ENCODE measurements at regions of chr12 and their contacts with region 1.

Region 1: DNA sequence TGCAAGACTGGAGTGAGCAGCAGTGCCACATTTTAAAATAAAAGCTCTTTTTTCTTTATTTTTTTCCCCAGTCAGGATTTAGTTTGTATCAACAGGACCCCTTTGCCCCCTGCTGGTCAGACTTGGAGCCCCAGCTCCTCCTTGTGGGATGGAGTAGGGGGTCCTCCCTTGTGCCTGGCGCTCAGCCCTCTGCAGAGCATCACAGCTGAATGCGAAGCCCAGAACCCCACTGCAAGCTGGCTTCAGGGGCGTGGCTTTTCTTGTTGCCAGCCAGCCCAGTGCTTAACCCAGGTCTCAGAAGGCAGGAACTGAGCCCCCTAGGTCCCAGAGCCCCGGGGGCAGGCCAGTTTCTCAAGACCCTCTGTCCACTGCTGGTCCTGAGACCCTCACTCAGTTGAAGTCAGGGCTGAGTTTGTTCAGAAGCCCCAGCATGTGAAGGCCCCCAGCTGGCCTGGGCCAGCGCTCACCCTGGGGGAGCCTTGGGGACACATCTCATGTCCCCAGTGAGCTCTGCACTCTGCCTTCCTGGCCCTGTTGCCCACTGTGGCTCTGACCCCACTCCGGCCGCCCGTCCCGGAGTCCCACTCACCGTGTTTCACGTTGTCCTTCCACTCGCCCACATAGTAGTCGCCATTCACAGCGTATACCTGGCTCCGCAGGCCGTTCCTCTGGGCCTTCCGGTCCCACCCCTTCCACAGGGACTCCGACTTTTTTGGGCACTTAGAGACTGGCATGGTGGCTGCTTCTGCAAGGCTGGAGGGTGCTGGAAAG is 519 bp downstream of the MORN3 start:
- DNase-seq: peak; percentile 77
- H3K4me3 Mint-ChIP-seq: no peak overlapping the region
- H3K27ac Mint-ChIP-seq: peak overlapping the region; percentile 75
- H3K4me1 Mint-ChIP-seq: peaks cover 79% of the 10 kb centered on the region
- H3K27me3 Mint-ChIP-seq: no peaks in the 10 kb centered on the region

Region 2: GRCh38 chr12:121499929-121500793 is 168.8 kb before region 1 on chr12:
- CTCF ChIA-PET with region 1: interaction called, 18 read pairs
- DNase-seq: peak; percentile 78
- H3K4me3 Mint-ChIP-seq: no peak overlapping the region
- H3K27ac Mint-ChIP-seq: no peak overlapping the region
- H3K4me1 Mint-ChIP-seq: peaks cover 12% of the 10 kb centered on the region
- H3K27me3 Mint-ChIP-seq: no peaks in the 10 kb centered on the region

Region 3: DNA sequence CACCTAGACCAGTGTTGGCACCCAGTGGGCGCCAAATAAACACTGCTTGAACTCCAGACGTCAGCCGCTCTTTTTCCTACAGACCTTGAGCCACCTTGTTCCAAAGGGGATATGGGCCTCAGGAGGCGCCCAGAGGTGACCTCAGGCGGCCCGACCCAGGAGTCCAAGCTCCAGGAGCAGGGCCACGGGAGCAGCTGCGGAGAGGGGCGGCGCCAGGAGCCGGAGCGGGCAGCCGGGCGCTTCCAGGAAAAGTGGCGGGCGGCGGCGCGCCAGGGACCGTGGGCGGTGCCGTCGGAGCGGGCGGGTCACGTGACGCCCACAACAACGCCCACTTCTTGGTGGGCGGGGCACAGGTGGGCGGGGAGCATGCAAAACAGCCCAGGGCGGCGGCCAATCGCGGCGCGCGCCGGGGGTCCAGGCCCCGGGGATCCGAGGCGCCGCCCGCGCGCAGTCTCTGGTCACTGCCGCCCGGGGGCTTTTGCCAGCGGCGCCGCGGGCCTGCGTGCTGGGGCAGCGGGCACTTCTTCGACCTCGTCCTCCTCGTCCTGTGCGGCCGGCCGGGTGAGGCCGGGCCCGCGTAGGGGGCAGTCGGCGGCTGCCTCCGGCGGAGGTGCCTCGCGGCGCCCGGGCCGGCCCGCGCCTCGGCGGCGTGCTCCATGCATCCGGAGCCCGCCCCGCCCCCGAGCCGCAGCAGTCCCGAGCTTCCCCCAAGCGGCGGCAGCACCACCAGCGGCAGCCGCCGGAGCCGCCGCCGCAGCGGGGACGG is 42.7 kb before region 1 on chr12 and contains the start of gene ORAI1:
- CTCF ChIA-PET with region 1: interaction called, 96 read pairs
- DNase-seq: peak; percentile 96
- H3K4me3 Mint-ChIP-seq: peak within 1 kb of the TSS; percentile 97
- H3K27ac Mint-ChIP-seq: peak within 1 kb of the TSS; percentile 96
- H3K4me1 Mint-ChIP-seq: peaks cover 45% of the 10 kb centered on the region
- H3K27me3 Mint-ChIP-seq: no peaks in the 10 kb centered on the region

Region 4: DNA sequence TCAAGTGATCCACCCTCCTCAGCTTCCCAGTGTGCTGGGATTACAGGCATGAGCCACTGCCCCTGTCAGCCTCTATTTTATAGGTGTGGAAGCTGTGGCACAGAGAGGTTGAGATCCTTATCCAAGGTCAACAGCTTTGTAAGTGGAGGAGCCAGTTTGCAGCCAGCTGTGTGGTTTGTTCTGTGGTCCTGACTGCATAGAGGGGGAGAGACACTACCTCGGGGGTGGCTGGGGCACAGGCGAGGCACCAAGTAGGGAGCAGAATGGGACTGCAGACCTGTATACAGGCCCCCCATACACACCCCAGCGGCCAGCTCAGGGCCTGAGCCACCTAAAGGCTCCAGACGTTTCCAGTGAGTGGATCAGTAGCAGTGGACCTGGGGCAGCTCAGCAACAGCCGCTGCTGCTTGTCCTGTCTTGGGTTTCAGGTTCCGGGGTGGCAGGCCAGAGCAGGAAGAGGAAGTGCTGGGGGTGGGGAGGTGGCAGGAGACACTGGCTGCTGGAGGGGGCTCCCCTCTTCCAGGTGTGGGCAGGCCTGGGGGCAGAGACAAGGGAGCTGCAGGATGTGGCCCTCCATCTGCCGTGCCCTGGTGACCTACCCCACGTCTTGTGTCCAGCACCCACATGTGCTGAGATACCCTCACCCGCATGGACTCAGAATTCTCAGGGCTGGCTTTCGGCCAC is 31.6 kb before region 1 on chr12:
- CTCF ChIA-PET with region 1: interaction called, 14 read pairs
- DNase-seq: peak; percentile 77
- H3K4me3 Mint-ChIP-seq: peak overlapping the region; percentile 50
- H3K27ac Mint-ChIP-seq: peak overlapping the region; percentile 90
- H3K4me1 Mint-ChIP-seq: peaks cover 76% of the 10 kb centered on the region
- H3K27me3 Mint-ChIP-seq: no peaks in the 10 kb centered on the region

Region 5: GRCh38 chr12:121693155-121693687 is 24.3 kb after region 1 on chr12:
- CTCF ChIA-PET with region 1: no interaction called
- DNase-seq: no peak
- H3K4me3 Mint-ChIP-seq: no peak overlapping the region
- H3K27ac Mint-ChIP-seq: no peak overlapping the region
- H3K4me1 Mint-ChIP-seq: peaks cover 6% of the 10 kb centered on the region
- H3K27me3 Mint-ChIP-seq: peaks cover 17% of the 10 kb centered on the region

Region 6: DNA sequence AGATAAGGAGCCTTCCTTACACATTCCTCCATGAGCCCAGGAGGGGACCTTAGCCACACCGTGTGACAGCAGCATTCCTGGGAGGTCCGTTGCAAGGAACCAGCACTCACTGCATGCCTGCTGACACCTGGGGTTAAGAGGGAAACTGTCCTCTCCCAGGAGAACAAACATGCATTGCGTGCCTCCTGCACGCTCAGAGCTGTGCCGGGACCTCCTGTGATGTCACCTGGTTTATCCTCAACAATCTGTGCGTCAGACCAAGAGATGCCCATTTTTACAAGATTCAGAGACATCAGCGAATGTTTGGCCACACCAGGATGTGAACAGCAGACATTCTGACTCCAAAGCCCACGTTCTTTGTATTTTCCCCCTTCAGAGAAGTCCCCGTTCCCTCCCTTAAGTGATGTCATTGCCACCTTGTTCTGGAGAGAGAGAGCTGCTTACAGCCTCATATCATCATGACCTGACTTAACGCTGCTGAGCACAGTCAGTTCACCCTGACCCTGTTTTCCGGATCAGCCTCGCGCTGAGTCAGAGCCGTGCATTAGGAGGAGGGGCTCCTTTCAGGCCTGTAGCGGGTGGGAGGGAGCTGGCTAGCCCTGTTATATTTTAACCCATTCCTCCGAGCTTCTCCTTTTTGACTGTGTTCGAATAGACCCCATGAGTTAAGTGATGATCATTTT is 79.8 kb after region 1 on chr12:
- CTCF ChIA-PET with region 1: no interaction called
- DNase-seq: no peak
- H3K4me3 Mint-ChIP-seq: no peak overlapping the region
- H3K27ac Mint-ChIP-seq: no peak overlapping the region
- H3K4me1 Mint-ChIP-seq: peaks cover 5% of the 10 kb centered on the region
- H3K27me3 Mint-ChIP-seq: no peaks in the 10 kb centered on the region

Region 7: DNA sequence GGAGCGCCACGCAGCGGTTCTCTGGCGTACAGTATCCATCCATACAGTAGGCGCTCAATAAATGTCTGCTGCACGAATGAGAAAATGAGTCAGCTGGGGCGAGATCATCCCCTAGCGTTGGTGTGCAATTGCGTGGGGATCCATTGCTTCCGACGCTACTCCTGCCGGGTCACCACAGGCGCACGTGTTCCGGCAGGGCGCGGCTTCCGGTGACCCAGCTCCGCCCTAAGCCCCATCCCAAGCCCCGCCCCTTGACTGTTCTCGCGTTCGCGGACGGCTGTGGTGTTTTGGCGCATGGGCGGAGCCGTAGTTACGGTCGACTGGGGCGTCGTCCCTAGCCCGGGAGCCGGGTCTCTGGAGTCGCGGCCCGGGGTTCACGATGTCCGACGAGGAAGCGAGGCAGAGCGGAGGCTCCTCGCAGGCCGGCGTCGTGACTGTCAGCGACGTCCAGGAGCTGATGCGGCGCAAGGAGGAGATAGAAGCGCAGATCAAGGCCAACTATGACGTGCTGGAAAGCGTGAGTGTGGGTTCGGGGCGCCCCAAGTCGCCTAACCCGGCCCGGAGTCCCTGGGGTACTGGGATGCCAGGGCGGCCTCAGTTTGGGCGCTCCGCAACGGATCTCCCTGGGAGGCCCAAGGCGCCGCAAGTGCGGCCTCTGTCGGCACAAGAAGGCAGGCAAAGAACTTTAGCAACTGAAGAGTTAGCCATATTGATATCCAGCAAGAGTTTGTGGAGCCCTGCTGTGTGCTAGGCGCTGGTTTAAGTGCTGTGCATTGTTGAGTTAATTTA is 219.7 kb after region 1 on chr12 and contains the start of gene PSMD9:
- CTCF ChIA-PET with region 1: no interaction called
- DNase-seq: peak; percentile 98
- H3K4me3 Mint-ChIP-seq: peak within 1 kb of the TSS; percentile 93
- H3K27ac Mint-ChIP-seq: peak within 1 kb of the TSS; percentile 99
- H3K4me1 Mint-ChIP-seq: peaks cover 45% of the 10 kb centered on the region
- H3K27me3 Mint-ChIP-seq: peaks cover 6% of the 10 kb centered on the region

Measured in activated naive CD4-positive, alpha-beta T cell treated with anti-CD3 and anti-CD28 coated beads, Interleukin-2, amount 10 ng/mL, durations not matched to agents 7 days and 5 days (primary cell).